Endothelial cell of umbilical vein (primary cell): ENCODE measurements at regions of chr6 and their contacts with region 1.

Region 1: DNA sequence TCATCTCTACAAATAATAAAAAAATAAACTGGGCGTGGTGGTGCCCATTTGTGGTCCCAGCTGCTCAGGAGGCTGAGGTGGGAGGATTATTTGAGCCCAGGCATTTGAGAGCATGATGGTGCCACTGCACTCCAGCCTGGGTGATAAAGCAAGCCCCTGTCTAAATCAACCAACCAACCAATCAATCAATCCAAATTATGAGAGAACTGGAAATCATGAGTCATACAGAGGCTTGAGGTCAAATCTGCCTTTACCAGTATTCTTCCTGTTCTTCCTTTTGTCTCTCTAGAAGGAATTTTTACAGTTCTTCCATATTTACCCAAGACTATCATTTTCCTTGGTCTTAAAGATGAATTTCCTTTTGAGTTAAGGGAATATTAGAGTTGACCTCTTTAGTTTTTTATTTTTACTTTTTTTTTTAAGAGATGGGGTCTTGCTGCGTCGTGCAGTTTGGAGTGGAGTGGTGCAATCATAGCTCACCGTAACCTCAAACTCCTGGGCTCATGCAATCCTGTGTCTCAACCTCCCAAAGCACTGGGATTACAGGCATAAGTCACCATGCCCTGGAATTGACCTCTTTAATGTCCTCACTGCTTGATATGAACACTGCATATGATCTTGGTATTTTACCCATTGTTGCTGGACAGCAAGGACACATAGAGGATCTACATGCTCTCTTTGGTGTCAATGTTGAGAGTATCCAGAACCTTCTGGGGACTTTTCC is 44.1 kb upstream of the TXNDC5 start:
- DNase-seq: peak; percentile 60
- H3K4me3 ChIP-seq: no peak overlapping the region
- H3K27ac ChIP-seq: no peak overlapping the region
- H3K4me1 ChIP-seq: peaks cover 27% of the 10 kb centered on the region
- H3K27me3 ChIP-seq: no peaks in the 10 kb centered on the region
- CTCF ChIP-seq: no peak
- POLR2A ChIP-seq: no peak

Region 2: GRCh38 chr6:7878401-7878964 is 76.2 kb before region 1 on chr6:
- CTCF ChIA-PET with region 1: no interaction called
- POLR2A ChIA-PET with region 1: no interaction called
- dilution Hi-C with region 1: no loop called
- intact Hi-C with region 1: no loop called
- DNase-seq: peak; percentile 48
- H3K4me3 ChIP-seq: no peak overlapping the region
- H3K27ac ChIP-seq: no peak overlapping the region
- H3K4me1 ChIP-seq: peaks cover 14% of the 10 kb centered on the region
- H3K27me3 ChIP-seq: no peaks in the 10 kb centered on the region
- CTCF ChIP-seq: no peak
- POLR2A ChIP-seq: peak; percentile 45

Region 3: DNA sequence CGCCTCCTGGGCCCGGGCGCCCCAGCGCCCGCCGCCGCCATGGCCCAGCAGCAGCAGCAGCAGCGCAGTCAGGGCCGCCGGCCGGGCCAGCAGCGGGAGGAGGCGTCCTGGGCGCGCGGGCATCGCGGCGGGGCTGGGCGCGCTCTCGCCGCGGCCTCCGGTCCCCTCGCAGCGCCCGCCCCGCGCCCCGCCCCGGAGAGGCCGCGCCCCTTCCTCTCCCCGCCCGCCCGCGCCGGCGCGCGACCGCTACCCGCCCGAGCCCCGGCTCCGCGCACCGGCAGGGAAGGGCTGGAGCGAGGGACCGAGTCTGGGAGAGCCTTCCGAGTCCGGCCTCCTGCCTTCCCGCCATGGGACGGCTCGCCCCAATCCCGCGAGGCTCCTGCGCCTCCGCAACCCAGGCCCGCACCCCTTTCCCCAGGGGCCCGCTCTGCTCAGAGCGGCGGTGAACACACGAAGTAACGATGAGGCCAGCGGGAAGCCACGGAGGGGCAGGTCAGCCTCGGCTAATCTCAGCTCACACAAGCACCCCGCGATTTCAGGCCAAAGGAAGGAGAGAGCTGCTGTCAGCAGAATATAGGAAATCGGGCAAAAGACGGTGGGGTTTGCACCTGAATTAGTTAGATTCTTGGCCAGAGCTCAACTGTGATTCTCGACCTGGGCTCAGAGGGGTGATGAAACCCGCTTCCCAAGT is 43.8 kb before region 1 on chr6 and contains the start of gene TXNDC5:
- CTCF ChIA-PET with region 1: interaction called, 3 read pairs
- POLR2A ChIA-PET with region 1: interaction called, 5 read pairs
- dilution Hi-C with region 1: no loop called
- intact Hi-C with region 1: loop called (anchors 2 kb)
- DNase-seq: peak; percentile 77
- H3K4me3 ChIP-seq: peak within 1 kb of the TSS; percentile 70 to 97 (median 76)
- H3K27ac ChIP-seq: peak within 1 kb of the TSS; percentile 94
- H3K4me1 ChIP-seq: peaks cover 45% of the 10 kb centered on the region
- H3K27me3 ChIP-seq: no peaks in the 10 kb centered on the region
- CTCF ChIP-seq: no peak
- POLR2A ChIP-seq: peak; percentile 76
- total RNA-seq, gene TXNDC5: 1,581 and 1,665 TPM in 2 replicates

Region 4: GRCh38 chr6:7933794-7934193 is 20.8 kb before region 1 on chr6:
- CTCF ChIA-PET with region 1: interaction called, 9 read pairs
- POLR2A ChIA-PET with region 1: no interaction called
- dilution Hi-C with region 1: no loop called
- intact Hi-C with region 1: loop called (anchors 2 kb)
- DNase-seq: no peak
- H3K4me3 ChIP-seq: no peak overlapping the region
- H3K27ac ChIP-seq: no peak overlapping the region
- H3K4me1 ChIP-seq: peaks cover 2% of the 10 kb centered on the region
- H3K27me3 ChIP-seq: no peaks in the 10 kb centered on the region
- CTCF ChIP-seq: no peak
- POLR2A ChIP-seq: no peak